MCF 10A (cell line): ENCODE measurements at regions of chr11 and their contacts with region 1.

Region 1: DNA sequence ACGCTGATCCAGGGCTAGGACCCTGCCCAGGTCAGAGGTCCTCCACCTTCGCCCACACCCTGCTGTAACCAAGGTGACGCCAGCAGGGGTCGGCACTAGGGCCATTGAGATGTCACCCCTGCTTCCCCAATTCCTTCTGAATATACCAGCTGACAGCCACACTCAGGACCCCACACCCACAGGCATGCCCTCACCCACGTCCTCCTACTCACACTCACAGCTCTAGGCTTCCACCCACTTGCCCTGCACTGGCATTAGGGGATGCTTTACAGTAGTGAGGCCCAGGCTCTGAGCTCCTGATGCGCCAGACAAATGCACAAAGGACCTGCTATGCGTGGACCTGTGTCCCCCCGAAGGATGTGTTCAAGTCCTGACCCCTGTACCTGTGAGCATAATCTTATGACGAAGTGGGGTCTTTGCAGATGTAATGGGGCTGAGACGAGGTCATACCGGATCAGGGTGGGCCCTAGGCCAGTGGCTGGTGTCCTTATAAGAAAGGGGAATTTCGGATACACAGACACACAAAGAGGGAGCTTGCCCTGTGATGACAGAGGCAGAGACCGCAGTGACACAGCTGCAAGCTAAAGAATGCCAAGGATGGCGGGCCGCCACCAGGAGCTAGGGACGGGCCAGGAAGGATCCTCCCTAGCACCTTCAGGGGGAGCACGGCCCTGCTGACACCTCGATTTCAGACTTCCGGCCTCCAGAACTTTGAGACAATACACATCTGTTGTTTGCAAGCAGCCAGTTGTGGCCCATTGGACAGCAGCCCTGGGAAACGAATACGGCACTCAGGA is 11.2 kb downstream of the WNT11 start:
- DNase-seq: no peak
- H3K4me3 Mint-ChIP-seq: no peak overlapping the region
- H3K27ac Mint-ChIP-seq: no peak overlapping the region
- H3K4me1 Mint-ChIP-seq: no peaks in the 10 kb centered on the region
- H3K27me3 Mint-ChIP-seq: no peaks in the 10 kb centered on the region
- CTCF ChIP-seq: no peak

Region 2: GRCh38 chr11:75574698-75575602 is 620.1 kb before region 1 on chr11:
- CTCF ChIA-PET with region 1: no interaction called
- POLR2A ChIA-PET with region 1: no interaction called
- intact Hi-C with region 1: no loop called
- DNase-seq: no peak
- H3K4me3 Mint-ChIP-seq: no peak overlapping the region
- H3K27ac Mint-ChIP-seq: no peak overlapping the region
- H3K4me1 Mint-ChIP-seq: peaks cover 6% of the 10 kb centered on the region
- H3K27me3 Mint-ChIP-seq: no peaks in the 10 kb centered on the region
- CTCF ChIP-seq: no peak

Region 3: GRCh38 chr11:76170468-76170867 is 24.6 kb before region 1 on chr11:
- CTCF ChIA-PET with region 1: no interaction called
- POLR2A ChIA-PET with region 1: no interaction called
- intact Hi-C with region 1: loop called (anchors 2 kb)
- DNase-seq: no peak
- H3K4me3 Mint-ChIP-seq: no peak overlapping the region
- H3K27ac Mint-ChIP-seq: no peak overlapping the region
- H3K4me1 Mint-ChIP-seq: no peaks in the 10 kb centered on the region
- H3K27me3 Mint-ChIP-seq: peaks cover 9% of the 10 kb centered on the region
- CTCF ChIP-seq: no peak